Thyroid gland (tissue), 4 donors: ENCODE measurements at regions of chr10 and their contacts with region 1.

Region 1: DNA sequence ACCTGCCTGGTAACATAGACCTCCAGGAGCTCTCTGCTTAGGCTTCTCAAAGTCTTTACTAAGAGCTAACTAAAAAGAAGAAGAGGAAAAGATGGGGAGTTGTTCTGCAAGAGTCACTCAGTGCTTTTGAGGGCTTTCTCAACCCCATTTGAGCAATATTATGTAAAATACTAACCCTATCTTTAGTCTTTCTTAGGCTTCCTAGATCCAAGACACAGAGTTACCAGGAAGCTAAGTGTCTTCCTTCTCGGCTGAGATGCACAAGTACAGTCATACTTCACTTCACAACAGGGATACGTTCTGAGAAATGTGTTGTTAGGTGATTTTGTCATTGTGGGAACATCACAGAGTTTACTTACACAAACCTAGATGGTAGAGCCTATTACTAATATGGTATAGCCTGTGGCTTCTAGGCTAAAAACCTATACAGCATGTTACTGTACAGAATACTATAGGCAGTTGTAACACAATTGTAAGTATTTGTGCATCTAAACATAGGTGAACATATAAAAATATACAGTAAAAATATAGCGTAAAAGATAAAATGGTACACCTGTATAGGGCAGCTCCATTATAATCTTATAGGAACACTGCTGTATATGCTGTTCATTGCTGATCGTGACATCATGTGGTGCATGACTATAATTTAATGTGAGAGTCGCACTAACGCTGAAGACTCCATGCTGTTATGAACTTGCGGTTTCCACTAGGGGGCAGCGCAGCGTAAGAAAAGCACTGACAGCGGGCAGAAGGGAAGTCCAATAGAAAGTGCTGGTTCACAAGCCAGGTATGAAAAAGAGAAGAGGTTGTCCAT is 16.3 kb downstream of the ANKRD22 start:
- DNase-seq: peak; percentile 76 to 87
- H3K4me3 ChIP-seq: no peak overlapping the region
- H3K27ac ChIP-seq: no peak overlapping the region
- H3K4me1 ChIP-seq: no peaks in the 10 kb centered on the region
- H3K27me3 ChIP-seq: no peaks in the 10 kb centered on the region
- CTCF ChIP-seq: peak; percentile 65 to 94 (median 82)
- POLR2A ChIP-seq: no peak

Region 2: DNA sequence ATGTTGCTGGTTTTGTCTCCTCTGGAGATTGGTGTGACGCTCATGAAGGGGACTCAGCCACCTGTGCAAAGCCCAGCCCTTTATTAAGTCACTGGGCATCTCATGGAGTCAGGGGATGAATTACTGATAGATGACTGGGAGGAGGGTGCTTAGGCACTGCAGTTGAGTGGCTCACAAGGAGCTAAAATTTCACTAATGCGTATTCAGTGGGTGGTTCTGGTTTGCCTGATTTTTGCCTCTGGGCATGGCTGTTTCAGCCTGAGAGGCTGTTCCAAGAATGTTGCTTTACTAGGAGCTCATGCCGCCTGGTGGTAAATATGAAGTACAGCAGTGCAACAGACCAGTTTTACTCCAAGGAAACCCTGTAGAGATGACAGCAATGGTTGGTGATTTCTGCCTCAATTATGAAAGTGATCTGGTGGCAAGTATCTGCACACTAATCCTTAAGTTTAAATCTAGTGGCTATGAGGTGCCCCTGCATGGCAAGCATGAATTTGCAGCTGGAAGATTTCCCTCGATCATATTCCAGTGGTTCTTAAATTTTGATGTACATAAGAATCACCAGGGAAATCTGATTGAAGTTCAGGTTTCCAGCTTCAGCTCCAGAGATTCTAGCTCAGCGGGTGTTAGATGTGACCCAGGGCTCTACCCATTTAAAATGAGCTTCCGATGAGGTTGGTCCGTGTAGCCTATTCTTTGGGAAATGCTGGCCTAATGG is 97.4 kb after region 1 on chr10:
- intact Hi-C with region 1: loop called (anchors 2 kb)
- DNase-seq: peak; percentile 69 to 73
- H3K4me3 ChIP-seq: no peak overlapping the region
- H3K27ac ChIP-seq: peak overlapping the region; percentile 28 to 52 (median 38)
- H3K4me1 ChIP-seq: peaks cover 16 to 26% of the 10 kb centered on the region in 2 donors
- H3K27me3 ChIP-seq: no peaks in the 10 kb centered on the region
- CTCF ChIP-seq: peak; percentile 67 to 99 (median 91)
- POLR2A ChIP-seq: no peak

Region 3: DNA sequence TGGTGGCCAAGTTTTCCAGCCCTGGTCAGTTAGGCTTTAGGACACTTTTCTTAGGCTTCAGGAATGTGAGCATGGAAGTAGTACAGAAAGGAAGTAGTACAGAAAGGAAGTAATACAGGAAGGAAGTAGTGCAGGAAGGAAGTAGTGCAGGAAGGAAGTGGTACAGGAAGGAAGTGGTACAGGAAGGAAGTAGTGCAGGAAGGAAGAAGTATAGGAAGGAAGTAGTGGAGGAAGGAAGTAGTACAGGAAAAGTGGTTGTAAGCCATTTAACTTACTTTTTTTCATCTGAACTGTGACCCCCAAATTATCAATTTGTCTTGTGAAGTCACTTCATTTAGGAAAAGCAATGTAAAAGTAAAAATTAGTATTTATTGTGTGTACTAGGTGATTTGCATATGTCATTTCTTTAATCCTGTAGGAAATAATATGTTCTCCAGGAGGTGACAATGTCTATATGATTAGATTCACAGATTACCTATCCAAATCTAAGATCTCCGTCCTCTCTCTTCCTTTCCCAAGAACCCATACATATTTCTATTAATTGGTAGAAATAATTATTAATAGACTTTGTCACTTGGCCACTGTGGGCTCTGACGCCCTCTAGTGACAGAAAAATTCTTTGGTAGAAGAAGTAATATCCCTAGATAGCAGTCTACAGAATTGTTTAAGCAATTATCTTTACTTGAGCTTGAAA is 151.4 kb after region 1 on chr10:
- intact Hi-C with region 1: loop called (anchors 10 kb)
- DNase-seq: peak; percentile 20 to 35
- H3K4me3 ChIP-seq: no peak overlapping the region
- H3K27ac ChIP-seq: no peak overlapping the region
- H3K4me1 ChIP-seq: peaks cover 5 to 6% of the 10 kb centered on the region in 2 donors
- H3K27me3 ChIP-seq: no peaks in the 10 kb centered on the region
- CTCF ChIP-seq: peak; percentile 60 to 94 (median 74)
- POLR2A ChIP-seq: no peak

Region 4: GRCh38 chr10:89207181-89207800 is 372.0 kb after region 1 on chr10 and contains the start of gene CH25H:
- intact Hi-C with region 1: loop called (anchors 10 kb)
- DNase-seq: peak; percentile 62 to 68
- H3K4me3 ChIP-seq: peak within 1 kb of the TSS in 2 of 3 donors; percentile 16 to 41
- H3K27ac ChIP-seq: peak within 1 kb of the TSS; percentile 0 to 67 (median 55)
- H3K4me1 ChIP-seq: peaks cover 14 to 18% of the 10 kb centered on the region in 2 donors
- H3K27me3 ChIP-seq: no peaks in the 10 kb centered on the region
- CTCF ChIP-seq: no peak
- POLR2A ChIP-seq: no peak
- total RNA-seq, gene CH25H: 0.44 to 6.3 (median 3.4) TPM in 3 of 4 donors, not detected in the other